GM12878 (cell line): ENCODE measurements at regions of chr1 and their contacts with region 1.

Region 1: GRCh38 chr1:179087665-179088225 is 5.9 kb downstream of the TOR3A start:
- DNase-seq: no peak
- ATAC-seq: no peak
- H3K4me3 ChIP-seq: no peak overlapping the region
- H3K27ac ChIP-seq: no peak overlapping the region
- H3K4me1 ChIP-seq: peaks cover 25% of the 10 kb centered on the region
- H3K27me3 ChIP-seq: no peaks in the 10 kb centered on the region
- CTCF ChIP-seq: no peak
- EP300 ChIP-seq: no peak
- POLR2A ChIP-seq: no peak
- RAD21 ChIP-seq: no peak

Region 2: GRCh38 chr1:178962853-178963711 is 124.7 kb before region 1 on chr1:
- CTCF ChIA-PET with region 1: no interaction called
- POLR2A ChIA-PET with region 1: no interaction called
- RAD21 ChIA-PET with region 1: no interaction called
- SMC1A ChIA-PET with region 1: no interaction called
- in situ Hi-C with region 1: no loop called
- intact Hi-C with region 1: no loop called
- DNase-seq: no peak
- ATAC-seq: no peak
- H3K4me3 ChIP-seq: no peak overlapping the region
- H3K27ac ChIP-seq: no peak overlapping the region
- H3K4me1 ChIP-seq: no peaks in the 10 kb centered on the region
- H3K27me3 ChIP-seq: no peaks in the 10 kb centered on the region
- CTCF ChIP-seq: no peak
- EP300 ChIP-seq: no peak
- POLR2A ChIP-seq: no peak
- RAD21 ChIP-seq: no peak

Region 3: DNA sequence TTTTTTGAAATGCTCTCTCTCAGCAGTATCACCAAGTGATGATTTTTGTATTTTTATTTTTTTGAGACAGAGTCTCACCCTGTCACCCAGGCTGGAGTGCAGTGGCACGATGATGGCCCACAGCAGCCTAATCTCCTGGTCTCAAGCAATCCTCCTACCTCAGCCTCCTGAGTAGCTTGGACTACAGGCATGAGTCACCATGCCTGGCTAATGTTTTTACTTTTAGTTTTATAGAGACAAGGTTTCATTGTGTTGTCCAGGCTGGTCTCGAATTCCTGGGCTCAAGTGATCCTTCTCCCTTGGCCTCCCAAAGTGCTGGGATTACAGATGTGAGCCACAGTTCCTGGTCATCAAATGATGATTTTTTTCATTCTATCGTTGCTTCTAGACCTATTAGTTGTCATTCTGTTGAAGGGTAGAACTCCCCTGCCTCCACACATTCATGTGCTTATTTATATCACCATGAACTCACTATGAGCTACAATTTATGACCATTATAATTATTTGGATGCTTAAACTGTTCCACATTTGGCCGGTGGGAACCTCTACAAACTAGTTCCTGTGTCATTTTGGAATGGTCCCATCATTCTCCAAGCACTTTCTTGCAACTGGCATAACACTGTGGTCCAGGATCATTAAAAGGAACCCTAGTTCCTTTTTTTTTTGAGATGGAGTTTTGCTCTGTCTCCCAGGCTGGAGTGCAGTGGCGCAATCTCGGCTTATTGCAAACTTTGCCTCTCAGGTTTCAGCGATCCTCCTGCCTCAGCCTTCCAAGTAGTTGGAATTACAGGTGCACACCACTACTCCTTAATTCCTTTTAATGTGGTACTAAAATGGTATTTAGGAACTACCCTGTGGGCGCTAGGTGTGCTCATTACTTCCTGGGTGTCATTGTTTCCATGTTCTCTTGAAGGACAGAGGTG is 26.1 kb before region 1 on chr1:
- CTCF ChIA-PET with region 1: no interaction called
- POLR2A ChIA-PET with region 1: no interaction called
- RAD21 ChIA-PET with region 1: no interaction called
- SMC1A ChIA-PET with region 1: no interaction called
- in situ Hi-C with region 1: no loop called
- intact Hi-C with region 1: no loop called
- DNase-seq: no peak
- ATAC-seq: no peak
- H3K4me3 ChIP-seq: no peak overlapping the region
- H3K27ac ChIP-seq: no peak overlapping the region
- H3K4me1 ChIP-seq: no peaks in the 10 kb centered on the region
- H3K27me3 ChIP-seq: no peaks in the 10 kb centered on the region
- CTCF ChIP-seq: no peak
- EP300 ChIP-seq: no peak
- POLR2A ChIP-seq: no peak
- RAD21 ChIP-seq: no peak

Region 4: DNA sequence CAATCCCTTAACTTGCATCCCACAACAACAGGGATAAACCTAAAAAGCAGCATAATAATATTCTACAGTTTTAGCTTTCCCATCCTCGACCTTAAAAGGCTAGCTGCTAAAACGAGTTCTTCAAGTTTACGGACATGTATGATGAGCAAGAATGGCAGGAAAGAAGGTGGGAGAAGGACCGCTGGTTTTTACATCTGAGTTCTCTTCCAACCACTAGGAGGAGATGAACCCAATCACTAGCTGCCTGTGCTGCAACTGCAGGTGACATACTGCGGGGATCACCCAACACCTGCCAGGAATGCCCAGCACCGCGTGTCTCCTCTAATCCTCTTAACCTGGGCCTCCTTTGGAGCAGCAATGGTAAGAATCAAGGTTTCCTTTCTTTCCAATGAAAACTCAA is 17.6 kb after region 1 on chr1:
- CTCF ChIA-PET with region 1: interaction called, 13 read pairs
- POLR2A ChIA-PET with region 1: no interaction called
- RAD21 ChIA-PET with region 1: interaction called, 6 read pairs
- SMC1A ChIA-PET with region 1: interaction called, 3 read pairs
- in situ Hi-C with region 1: no loop called
- intact Hi-C with region 1: no loop called
- DNase-seq: no peak
- ATAC-seq: peak; percentile 63
- H3K4me3 ChIP-seq: no peak overlapping the region
- H3K27ac ChIP-seq: no peak overlapping the region
- H3K4me1 ChIP-seq: no peaks in the 10 kb centered on the region
- H3K27me3 ChIP-seq: no peaks in the 10 kb centered on the region
- CTCF ChIP-seq: peak; percentile 19 to 32 (median 26); a peak in 4 of 6 replicates
- EP300 ChIP-seq: no peak
- POLR2A ChIP-seq: no peak
- RAD21 ChIP-seq: 0 out of 2 replicates have a peak, but pooled peaks have one; percentile 15